Left colon (tissue), 2 donors: ENCODE measurements at regions of chr21 and their contacts with region 1.

Region 1: DNA sequence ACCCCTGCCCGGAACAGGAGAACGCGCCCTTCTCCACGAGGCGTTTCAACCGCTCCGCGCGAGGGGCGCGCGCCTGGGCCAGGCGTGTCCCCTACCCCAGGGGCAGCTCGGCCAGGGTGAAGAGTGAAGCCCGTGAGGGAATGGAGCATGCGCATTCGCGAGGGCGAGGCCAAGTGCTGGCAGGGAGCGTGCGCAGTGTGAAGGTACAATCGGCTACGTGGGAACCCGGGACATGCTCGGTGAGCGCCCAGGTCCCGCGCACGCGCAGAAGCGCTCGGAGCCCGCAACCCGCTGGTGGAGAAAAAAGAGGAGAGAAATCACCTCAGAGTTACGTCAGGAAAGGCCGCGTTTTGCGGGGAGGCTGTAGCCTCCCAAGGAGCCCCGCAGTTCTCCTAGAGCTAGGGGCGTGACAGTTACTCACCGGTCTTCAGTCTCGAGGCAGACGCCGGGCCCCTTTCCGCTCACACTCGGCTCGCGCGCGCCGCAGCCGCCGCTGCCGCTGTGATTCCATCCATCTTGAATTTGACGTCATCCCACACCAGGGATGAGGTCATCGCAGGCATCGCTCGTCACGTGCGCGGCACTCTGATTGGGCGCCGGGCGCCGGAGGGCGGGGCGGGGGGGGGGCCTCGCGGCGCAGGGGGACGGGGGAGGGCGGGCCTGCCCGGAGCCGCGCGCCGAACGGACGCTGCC is at the start of gene ZBTB21:
- DNase-seq: peak; percentile 99
- ATAC-seq: peak; percentile 85
- total RNA-seq, gene ZBTB21: 15.1 to 15.2 TPM

Region 2: GRCh38 chr21:42097860-42098454 is 88.0 kb after region 1 on chr21:
- intact Hi-C with region 1: loop called in 1 of 2 experiments (anchors 10 kb)
- DNase-seq: peak; percentile 58 to 85
- ATAC-seq: peak; percentile 79